Activated CD8-positive, alpha-beta T cell treated with anti-CD3 and anti-CD28 coated beads for 36 hours (primary cell): ENCODE measurements at regions of chr6 and their contacts with region 1.

Region 1: DNA sequence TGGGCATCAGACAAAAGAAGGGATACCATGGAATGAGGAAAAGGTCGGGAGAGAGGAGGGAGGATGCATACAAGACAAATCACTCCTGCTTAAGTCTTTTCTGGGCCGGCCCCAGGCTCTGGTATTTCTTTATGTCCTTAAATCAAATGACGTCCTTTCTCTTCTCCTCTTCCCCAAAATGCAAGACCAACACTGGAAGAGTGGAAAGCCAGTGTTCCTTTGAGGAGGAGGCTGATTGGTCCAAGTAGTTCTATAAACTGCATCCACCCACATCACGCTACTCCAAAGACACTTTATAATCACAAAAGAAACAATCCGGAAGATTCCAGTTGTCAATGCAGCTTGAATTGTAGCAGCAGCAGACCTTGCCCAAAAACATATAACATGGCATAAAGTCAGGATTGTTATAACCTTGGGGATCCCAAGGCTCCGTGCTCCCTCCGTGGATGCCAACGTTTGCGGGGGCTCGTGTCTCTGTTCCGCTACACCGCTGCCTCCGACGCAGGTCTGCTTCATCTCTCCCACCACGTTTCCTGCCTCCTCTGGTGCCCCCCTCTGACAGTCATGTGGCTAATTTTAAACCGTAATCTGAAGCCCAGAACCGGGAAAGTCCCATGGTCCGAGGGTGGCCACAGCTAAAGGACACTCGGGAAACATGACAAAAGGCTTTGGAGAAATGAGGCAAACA is 47.1 kb downstream of the MCUR1 start:
- DNase-seq: peak; percentile 72
- ATAC-seq: peak; percentile 47
- H3K4me3 Mint-ChIP-seq: peak overlapping the region; percentile 67
- H3K27ac Mint-ChIP-seq: peak overlapping the region; percentile 64
- H3K4me1 Mint-ChIP-seq: peaks cover 38% of the 10 kb centered on the region
- H3K27me3 Mint-ChIP-seq: peaks cover 3% of the 10 kb centered on the region
- CTCF ChIP-seq: peak; percentile 30

Region 2: DNA sequence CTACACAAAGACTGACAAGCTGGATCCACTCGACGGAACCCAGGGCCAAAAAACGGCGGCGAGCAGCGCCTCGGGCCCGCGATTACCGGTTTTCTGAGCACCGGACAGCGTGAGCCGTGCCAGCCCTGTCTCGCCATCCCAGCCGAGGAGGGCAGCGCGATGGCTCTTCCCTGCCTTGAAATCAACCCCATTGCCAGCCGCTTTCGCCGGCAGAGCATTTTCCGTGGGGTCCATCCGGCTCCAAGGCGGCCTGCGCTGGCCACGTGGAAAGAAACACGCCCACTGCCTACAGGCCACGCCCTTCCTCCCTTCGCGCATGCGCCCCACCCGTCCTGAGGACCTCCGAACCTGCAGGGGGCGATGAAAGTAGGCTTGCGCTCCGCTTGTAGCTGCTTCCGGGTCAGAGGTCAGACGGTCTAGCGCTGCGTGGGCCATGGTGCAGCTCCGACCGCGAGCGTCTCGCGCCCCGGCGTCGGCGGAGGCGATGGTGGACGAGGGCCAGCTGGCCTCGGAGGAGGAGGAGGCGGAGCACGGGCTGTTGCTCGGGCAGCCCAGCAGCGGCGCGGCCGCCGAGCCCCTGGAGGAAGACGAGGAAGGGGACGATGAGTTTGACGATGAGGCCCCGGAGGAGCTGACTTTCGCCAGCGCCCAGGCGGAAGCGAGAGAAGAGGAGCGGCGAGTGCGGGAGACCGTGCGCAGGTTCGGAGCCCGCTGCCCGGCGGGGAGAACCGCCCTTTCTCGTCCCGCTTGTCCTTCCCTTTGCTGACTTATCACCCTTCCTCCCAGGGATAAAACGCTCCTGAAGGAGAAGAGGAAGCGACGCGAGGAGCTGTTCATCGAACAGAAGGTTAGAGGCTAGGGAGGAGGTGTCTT is 152.1 kb before region 1 on chr6 and contains the start of gene NOL7:
- CTCF ChIA-PET with region 1: interaction called, 5 read pairs
- POLR2A ChIA-PET with region 1: interaction called, 3 read pairs
- intact Hi-C with region 1: loop called (anchors 10 kb)
- DNase-seq: peak; percentile 98
- ATAC-seq: peak; percentile 95
- H3K4me3 Mint-ChIP-seq: peak within 1 kb of the TSS; percentile 99
- H3K27ac Mint-ChIP-seq: peak within 1 kb of the TSS; percentile 96
- H3K4me1 Mint-ChIP-seq: peaks cover 36% of the 10 kb centered on the region
- H3K27me3 Mint-ChIP-seq: no peaks in the 10 kb centered on the region
- CTCF ChIP-seq: peak; percentile 88
- total RNA-seq, gene NOL7: 95.2 to 95.8 TPM

Region 3: GRCh38 chr6:13671548-13672127 is 95.6 kb before region 1 on chr6:
- CTCF ChIA-PET with region 1: no interaction called
- POLR2A ChIA-PET with region 1: no interaction called
- intact Hi-C with region 1: no loop called
- DNase-seq: no peak
- ATAC-seq: no peak
- H3K4me3 Mint-ChIP-seq: no peak overlapping the region
- H3K27ac Mint-ChIP-seq: peak overlapping the region; percentile 1
- H3K4me1 Mint-ChIP-seq: peaks cover 77% of the 10 kb centered on the region
- H3K27me3 Mint-ChIP-seq: no peaks in the 10 kb centered on the region
- CTCF ChIP-seq: no peak

Region 4: DNA sequence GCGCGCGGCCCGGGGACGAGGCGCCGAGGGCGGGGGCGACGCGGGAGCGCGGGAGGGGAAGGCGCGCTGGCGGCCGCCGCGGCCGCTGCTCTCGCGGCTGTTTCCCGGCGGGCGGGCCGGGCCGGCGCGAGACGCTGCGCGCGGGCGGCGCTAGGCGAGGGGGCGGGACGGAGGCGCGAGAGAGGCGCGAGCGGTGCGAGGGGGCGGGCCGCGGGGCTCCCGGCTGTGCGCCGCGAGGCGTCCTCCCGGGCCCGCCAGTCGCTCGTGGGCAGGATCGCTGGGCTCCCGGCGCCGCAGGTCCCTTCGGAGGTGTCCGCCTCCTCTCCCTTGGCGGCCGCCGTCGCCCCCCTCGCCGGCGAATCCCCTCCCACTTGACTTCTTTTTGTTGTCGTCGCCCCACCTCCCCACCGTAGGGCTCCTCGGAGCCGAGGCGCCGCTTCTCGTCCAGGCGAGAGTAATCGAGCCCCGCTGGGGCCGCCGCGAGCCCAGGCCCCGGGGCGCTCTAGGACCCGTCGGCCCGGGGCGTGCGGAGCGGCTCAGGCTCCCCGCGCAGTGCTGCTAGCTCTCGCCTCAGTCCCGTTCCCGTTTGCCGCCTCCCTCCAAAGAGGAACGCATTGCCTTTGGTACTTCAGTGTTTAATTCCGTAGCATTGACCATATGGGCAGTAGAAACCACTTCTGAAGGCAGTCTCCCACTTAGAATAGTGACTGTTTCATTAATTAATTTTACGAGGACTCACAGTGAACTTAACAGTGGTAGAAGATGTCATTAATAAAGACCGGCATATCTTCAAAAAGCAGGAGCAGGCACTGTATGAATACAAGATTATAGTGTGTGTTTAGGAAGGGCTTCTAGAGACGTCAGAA is 55.3 kb before region 1 on chr6 and contains the start of gene RANBP9:
- CTCF ChIA-PET with region 1: interaction called, 7 read pairs
- POLR2A ChIA-PET with region 1: interaction called, 26 read pairs
- intact Hi-C with region 1: loop called (anchors 2 kb)
- DNase-seq: peak; percentile 89
- ATAC-seq: peak; percentile 77
- H3K4me3 Mint-ChIP-seq: peak within 1 kb of the TSS; percentile 100
- H3K27ac Mint-ChIP-seq: peak within 1 kb of the TSS; percentile 96
- H3K4me1 Mint-ChIP-seq: peaks cover 47% of the 10 kb centered on the region
- H3K27me3 Mint-ChIP-seq: no peaks in the 10 kb centered on the region
- CTCF ChIP-seq: no peak
- total RNA-seq, gene RANBP9: 53.3 to 56.2 TPM

Region 5: GRCh38 chr6:13795041-13795750 is 27.9 kb after region 1 on chr6:
- CTCF ChIA-PET with region 1: interaction called, 10 read pairs
- POLR2A ChIA-PET with region 1: no interaction called
- intact Hi-C with region 1: no loop called
- DNase-seq: peak; percentile 95
- ATAC-seq: peak; percentile 97
- H3K4me3 Mint-ChIP-seq: no peak overlapping the region
- H3K27ac Mint-ChIP-seq: peak overlapping the region; percentile 38
- H3K4me1 Mint-ChIP-seq: peaks cover 17% of the 10 kb centered on the region
- H3K27me3 Mint-ChIP-seq: no peaks in the 10 kb centered on the region
- CTCF ChIP-seq: peak; percentile 89

Region 6: GRCh38 chr6:13831615-13832014 is 64.3 kb after region 1 on chr6:
- CTCF ChIA-PET with region 1: no interaction called
- POLR2A ChIA-PET with region 1: no interaction called
- intact Hi-C with region 1: no loop called
- DNase-seq: no peak
- ATAC-seq: no peak
- H3K4me3 Mint-ChIP-seq: no peak overlapping the region
- H3K27ac Mint-ChIP-seq: no peak overlapping the region
- H3K4me1 Mint-ChIP-seq: no peaks in the 10 kb centered on the region
- H3K27me3 Mint-ChIP-seq: peaks cover 8% of the 10 kb centered on the region
- CTCF ChIP-seq: no peak

Region 7: GRCh38 chr6:13935190-13935880 is 168.1 kb after region 1 on chr6:
- CTCF ChIA-PET with region 1: no interaction called
- POLR2A ChIA-PET with region 1: no interaction called
- intact Hi-C with region 1: no loop called
- DNase-seq: no peak
- ATAC-seq: no peak
- H3K4me3 Mint-ChIP-seq: no peak overlapping the region
- H3K27ac Mint-ChIP-seq: no peak overlapping the region
- H3K4me1 Mint-ChIP-seq: peaks cover 4% of the 10 kb centered on the region
- H3K27me3 Mint-ChIP-seq: peaks cover 15% of the 10 kb centered on the region
- CTCF ChIP-seq: no peak